AG04450 (cell line): ENCODE measurements at regions of chr11 and their contacts with region 1.

Region 1: DNA sequence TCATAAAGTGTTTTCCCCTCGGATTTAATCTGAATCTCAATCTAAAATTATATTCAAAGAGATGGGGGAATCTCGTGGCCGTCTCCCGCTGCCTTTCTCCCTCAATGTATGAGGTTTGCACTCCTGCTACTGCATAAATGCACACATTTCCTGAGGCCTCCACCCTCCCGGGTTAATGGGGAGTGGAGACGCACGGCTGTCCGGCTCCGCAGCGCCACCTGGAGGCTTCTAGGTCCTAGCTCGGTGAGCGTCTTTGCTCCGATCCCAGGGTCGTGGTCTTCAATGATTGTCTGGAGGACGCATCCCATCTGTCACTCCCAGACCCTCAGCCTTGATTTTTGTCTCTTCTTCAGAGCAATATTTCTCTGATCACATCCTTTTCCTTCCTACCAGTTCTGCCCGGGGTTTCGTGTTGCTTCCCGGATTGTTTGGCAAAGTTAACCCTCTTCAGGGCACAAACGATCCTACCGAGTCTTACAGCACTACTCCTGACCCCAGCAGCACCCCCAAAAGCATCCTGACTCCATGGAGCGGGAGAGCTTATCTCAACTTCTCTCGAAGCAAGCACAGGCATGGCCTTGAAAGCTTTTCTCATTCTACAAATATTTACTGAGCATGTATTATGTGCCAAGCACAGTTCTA is at the start of gene LMO1:
- DNase-seq: peak; percentile 13
- H3K4me3 ChIP-seq: peak within 1 kb of the TSS; percentile 41
- H3K27ac ChIP-seq: no peak within 1 kb of the TSS
- H3K27me3 ChIP-seq: peaks cover 83% of the 10 kb centered on the region
- CTCF ChIP-seq: peak; percentile 88
- polyA plus RNA-seq, gene LMO1: not detected in 2 replicates

Region 2: GRCh38 chr11:8126649-8127289 is 137.1 kb before region 1 on chr11:
- CTCF ChIA-PET with region 1: no interaction called
- POLR2A ChIA-PET with region 1: no interaction called
- DNase-seq: no peak
- H3K4me3 ChIP-seq: no peak overlapping the region
- H3K27ac ChIP-seq: no peak overlapping the region
- H3K27me3 ChIP-seq: peaks cover 7% of the 10 kb centered on the region
- CTCF ChIP-seq: no peak

Region 3: DNA sequence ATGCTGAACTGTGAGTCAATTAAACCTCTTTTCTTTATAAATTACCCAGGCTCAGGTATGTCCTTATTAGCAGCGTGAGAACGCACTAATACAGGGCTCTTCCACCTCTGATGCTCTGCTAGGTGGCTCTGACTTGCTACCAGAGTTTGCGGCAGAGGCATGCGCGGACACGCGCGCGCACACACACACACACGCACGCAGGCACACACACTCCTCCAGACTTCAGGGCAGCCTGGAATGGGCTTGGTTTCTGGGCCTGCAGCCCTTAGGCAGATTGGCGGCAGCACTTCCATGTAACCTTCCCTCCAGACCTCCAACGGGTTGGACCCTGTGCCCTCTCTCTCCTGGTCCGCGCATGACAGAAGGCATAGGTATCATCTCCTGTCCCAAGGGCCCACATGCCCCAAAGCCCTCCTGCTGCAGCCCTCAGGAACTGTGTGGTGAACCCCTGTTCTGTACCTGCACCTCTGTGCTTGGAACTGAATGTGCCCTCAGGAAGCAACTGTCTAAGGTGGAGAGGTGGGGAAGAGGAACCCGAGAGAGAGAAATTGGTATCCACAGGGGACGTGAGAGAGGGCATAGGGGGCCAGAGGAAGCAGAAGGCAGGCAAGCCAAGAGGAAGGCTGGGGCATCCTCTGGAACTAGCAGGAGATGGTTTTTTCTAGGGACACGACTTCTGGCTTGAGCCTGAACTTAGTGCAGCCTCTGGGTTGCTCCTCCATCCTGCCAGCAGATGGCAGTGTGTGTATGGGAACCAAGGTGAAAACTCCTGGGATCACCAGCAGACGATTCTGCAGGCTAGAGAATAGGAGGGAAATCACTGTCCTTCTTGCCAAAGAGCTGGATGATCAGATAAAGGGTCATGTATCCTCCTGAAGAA is 71.6 kb before region 1 on chr11:
- CTCF ChIA-PET with region 1: interaction called, 12 read pairs
- POLR2A ChIA-PET with region 1: no interaction called
- DNase-seq: peak; percentile 32
- H3K4me3 ChIP-seq: no peak overlapping the region
- H3K27ac ChIP-seq: no peak overlapping the region
- H3K27me3 ChIP-seq: peaks cover 9% of the 10 kb centered on the region
- CTCF ChIP-seq: peak; percentile 91

Region 4: DNA sequence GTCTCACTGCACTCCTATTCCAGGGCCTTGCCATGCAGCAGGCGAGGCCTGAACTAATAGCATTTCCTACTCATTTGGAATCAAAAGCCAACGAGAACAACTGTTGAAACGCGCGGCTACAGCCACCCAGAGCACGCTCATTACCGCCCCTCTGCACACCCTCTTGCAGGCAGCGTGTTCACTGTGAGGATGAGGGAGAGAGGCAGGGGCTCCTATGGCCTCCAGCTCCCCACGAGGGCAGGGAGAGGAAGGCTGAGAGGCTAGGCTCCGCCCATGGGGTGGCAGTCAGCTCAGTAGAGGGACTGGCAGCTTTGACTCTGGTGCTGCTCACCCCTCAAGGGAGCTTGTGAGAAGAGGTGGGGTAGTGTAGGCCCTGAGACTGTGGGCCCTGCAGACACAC is 26.4 kb before region 1 on chr11:
- CTCF ChIA-PET with region 1: interaction called, 13 read pairs
- POLR2A ChIA-PET with region 1: no interaction called
- DNase-seq: no peak
- H3K4me3 ChIP-seq: no peak overlapping the region
- H3K27ac ChIP-seq: no peak overlapping the region
- H3K27me3 ChIP-seq: peaks cover 13% of the 10 kb centered on the region
- CTCF ChIP-seq: no peak

Region 5: GRCh38 chr11:8277691-8278090 is 13.8 kb after region 1 on chr11:
- CTCF ChIA-PET with region 1: interaction called, 28 read pairs
- POLR2A ChIA-PET with region 1: no interaction called
- DNase-seq: no peak
- H3K4me3 ChIP-seq: no peak overlapping the region
- H3K27ac ChIP-seq: no peak overlapping the region
- H3K27me3 ChIP-seq: peaks cover 16% of the 10 kb centered on the region
- CTCF ChIP-seq: no peak

Region 6: GRCh38 chr11:8566613-8567210 is 302.8 kb after region 1 on chr11:
- CTCF ChIA-PET with region 1: interaction called, 18 read pairs
- POLR2A ChIA-PET with region 1: interaction called, 3 read pairs
- DNase-seq: no peak
- H3K4me3 ChIP-seq: no peak overlapping the region
- H3K27ac ChIP-seq: no peak overlapping the region
- H3K27me3 ChIP-seq: no peaks in the 10 kb centered on the region
- CTCF ChIP-seq: peak; percentile 64